SK-N-SH (cell line): ENCODE measurements at regions of chr2 and their contacts with region 1.

Region 1: DNA sequence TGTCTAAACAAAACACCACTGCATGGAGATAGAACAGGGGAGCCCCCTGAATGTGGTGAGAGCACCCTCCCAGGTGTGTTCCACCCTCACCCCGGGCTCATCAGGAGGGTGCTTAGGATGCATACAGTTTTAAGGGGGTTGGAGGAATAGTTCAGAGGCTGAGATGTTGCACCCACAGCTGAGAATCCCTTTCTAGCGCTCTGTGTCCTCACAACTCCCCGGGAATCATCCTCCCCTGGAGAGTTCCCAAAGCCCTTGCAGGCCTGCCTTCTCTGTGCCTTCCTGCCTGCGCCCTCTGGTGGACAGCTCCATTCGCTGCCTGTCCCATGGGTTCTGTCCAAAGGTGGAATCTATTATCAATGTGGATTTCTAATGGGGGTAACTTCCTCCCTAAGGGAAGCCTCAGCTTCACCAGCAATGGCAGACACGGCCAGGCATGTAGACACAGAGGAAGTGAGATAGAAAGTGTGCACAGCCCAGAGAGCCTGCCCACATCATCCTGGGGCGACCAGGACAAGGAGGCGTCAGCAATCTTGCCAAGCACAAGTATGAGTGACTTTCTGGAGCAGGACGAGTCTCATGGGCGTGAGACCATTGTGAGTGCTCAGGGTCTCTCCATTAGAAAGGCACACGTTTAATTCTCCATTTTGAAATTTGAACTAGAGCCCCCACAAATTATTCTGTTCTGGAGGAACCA is 1.2 kb upstream of the UGT1A5 start:
- DNase-seq: peak; percentile 67
- H3K4me3 ChIP-seq: peak overlapping the region in 1 of 2 experiments; percentile 1; a peak in 1 of 4 replicates
- H3K27ac ChIP-seq: no peak overlapping the region
- H3K4me1 ChIP-seq: peaks cover 0 to 13% of the 10 kb centered on the region in 2 experiments; a peak in 2 of 4 replicates
- H3K27me3 ChIP-seq: no peaks in the 10 kb centered on the region
- CTCF ChIP-seq: peak; percentile 89
- EP300 ChIP-seq: no peak
- RAD21 ChIP-seq: peak; percentile 82

Region 2: GRCh38 chr2:233699424-233700027 is 11.9 kb before region 1 on chr2:
- CTCF ChIA-PET with region 1: interaction called, 12 read pairs
- POLR2A ChIA-PET with region 1: no interaction called
- DNase-seq: no peak
- H3K4me3 ChIP-seq: no peak overlapping the region
- H3K27ac ChIP-seq: peak overlapping the region; percentile 19 to 76; a peak in 2 of 4 replicates
- H3K4me1 ChIP-seq: peaks cover 0 to 3% of the 10 kb centered on the region in 2 experiments; a peak in 2 of 4 replicates
- H3K27me3 ChIP-seq: no peaks in the 10 kb centered on the region
- CTCF ChIP-seq: no peak
- EP300 ChIP-seq: no peak
- RAD21 ChIP-seq: no peak

Region 3: GRCh38 chr2:233764264-233764663 is 52.8 kb after region 1 on chr2:
- CTCF ChIA-PET with region 1: no interaction called
- POLR2A ChIA-PET with region 1: no interaction called
- DNase-seq: no peak
- H3K4me3 ChIP-seq: no peak overlapping the region
- H3K27ac ChIP-seq: no peak overlapping the region
- H3K4me1 ChIP-seq: no peaks in the 10 kb centered on the region
- H3K27me3 ChIP-seq: no peaks in the 10 kb centered on the region
- CTCF ChIP-seq: no peak
- EP300 ChIP-seq: no peak
- RAD21 ChIP-seq: no peak